ENCODE measurements at regions of chr5 and their contacts with region 1.

Region 1: GRCh38 chr5:177390363-177391300 is 6.4 kb downstream of the SLC34A1 start:
- DNase-seq: peak; percentile 95
- H3K4me3 Mint-ChIP-seq: peak overlapping the region; percentile 10
- H3K27ac Mint-ChIP-seq: peak overlapping the region; percentile 79
- H3K4me1 Mint-ChIP-seq: peaks cover 34% of the 10 kb centered on the region
- H3K27me3 Mint-ChIP-seq: no peaks in the 10 kb centered on the region

Region 2: DNA sequence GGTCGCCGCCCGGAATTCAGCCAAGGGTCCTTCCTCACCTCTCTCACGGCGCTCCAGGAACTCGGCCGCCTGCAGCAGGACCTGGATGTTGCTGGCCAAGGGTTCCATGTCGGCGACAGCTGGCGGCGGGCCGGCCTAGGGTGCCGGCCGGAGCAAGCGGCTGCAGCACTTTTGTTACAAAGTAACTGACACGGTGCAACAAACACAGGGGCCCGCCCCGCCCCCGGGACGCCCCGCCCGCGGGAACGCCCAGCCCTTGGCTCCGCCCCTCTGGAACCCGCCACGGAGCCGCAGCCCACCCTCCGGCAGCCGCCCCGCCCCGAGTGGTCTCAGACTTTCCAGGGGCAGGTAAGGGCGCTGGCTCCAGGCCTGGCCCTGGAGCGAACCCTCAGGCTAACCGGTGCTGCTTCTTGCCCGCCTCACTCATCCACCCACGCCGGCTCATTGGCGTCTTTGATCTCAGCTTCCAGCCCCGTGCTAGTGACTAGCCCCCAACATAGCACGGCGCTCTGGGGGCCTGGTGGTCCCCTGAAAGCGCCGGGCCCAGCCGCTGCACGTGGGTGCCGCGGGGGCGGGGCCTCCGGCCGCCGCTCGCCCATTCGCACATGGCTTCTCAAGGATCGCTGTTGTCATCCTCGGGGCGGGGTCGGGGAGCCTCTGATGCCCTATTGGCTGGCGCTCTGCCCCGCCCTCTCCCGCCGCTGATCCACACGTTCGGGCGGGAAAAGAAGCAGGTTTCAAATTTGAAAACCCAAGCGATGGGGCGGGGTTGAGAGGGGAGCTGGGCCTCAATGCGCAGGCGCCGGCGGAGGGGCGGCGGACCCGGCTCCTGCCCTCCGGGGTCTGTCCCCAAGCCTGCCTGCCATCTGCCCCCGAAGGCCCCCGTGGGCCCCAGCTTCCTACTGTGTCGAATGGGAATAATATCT is 78.6 kb before region 1 on chr5 and contains the start of gene MXD3:
- CTCF ChIA-PET with region 1: interaction called, 25 read pairs
- intact Hi-C with region 1: loop called (anchors 2 kb)
- DNase-seq: peak; percentile 99
- H3K4me3 Mint-ChIP-seq: peak within 1 kb of the TSS; percentile 97
- H3K27ac Mint-ChIP-seq: peak within 1 kb of the TSS; percentile 82
- H3K4me1 Mint-ChIP-seq: peaks cover 20% of the 10 kb centered on the region
- H3K27me3 Mint-ChIP-seq: peaks cover 3% of the 10 kb centered on the region
- total RNA-seq, gene MXD3: 45.0 to 51.7 TPM

Region 3: DNA sequence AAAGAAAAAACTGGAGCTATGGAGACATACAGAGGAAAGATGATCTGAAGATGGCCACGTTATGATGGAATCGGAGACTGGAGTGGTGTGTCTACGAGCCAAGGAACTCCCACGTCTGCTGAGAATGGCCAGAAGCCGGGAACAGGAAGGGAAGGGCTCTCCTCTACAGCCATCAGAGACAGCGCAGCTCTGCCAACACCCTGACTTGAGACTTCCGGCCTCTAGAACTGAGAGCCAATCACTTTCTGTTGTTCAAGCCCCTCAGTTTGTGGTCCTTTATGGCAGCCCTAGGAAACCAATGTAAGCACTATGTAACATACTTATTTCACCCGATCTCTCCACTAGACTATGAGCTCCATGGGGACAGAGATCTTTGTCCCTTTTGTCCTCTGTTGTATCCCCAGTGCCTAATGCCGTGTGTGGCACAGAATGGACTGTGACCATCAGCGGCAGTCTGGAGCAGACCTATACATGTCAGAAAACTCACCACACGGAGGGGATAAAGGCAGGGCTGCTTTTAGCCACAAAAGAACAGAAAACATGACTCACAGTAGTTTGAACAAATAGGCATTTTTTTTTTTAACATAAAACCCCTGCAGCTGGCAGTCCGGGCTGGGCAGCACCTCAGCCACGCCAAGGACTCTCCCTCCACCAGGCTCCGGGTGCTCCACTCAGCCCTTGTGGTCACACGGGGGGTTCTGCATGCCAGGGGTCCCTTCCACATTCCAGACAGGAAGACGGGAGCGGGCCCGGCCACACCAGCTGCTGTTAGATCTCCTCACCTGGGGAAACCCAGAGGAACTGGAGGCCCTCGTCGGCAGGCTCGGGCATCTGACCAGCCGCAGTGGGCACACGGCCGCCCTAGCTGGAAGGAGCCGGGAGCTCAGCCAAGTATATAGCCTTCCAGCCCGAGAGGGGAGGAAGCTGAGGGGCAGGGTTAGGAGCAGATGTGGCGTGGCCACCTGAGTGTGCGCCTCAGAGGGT is 62.8 kb before region 1 on chr5:
- CTCF ChIA-PET with region 1: interaction called, 10 read pairs
- intact Hi-C with region 1: no loop called
- DNase-seq: peak; percentile 26
- H3K4me3 Mint-ChIP-seq: no peak overlapping the region
- H3K27ac Mint-ChIP-seq: peak overlapping the region; percentile 5
- H3K4me1 Mint-ChIP-seq: peaks cover 2% of the 10 kb centered on the region
- H3K27me3 Mint-ChIP-seq: no peaks in the 10 kb centered on the region

Region 4: DNA sequence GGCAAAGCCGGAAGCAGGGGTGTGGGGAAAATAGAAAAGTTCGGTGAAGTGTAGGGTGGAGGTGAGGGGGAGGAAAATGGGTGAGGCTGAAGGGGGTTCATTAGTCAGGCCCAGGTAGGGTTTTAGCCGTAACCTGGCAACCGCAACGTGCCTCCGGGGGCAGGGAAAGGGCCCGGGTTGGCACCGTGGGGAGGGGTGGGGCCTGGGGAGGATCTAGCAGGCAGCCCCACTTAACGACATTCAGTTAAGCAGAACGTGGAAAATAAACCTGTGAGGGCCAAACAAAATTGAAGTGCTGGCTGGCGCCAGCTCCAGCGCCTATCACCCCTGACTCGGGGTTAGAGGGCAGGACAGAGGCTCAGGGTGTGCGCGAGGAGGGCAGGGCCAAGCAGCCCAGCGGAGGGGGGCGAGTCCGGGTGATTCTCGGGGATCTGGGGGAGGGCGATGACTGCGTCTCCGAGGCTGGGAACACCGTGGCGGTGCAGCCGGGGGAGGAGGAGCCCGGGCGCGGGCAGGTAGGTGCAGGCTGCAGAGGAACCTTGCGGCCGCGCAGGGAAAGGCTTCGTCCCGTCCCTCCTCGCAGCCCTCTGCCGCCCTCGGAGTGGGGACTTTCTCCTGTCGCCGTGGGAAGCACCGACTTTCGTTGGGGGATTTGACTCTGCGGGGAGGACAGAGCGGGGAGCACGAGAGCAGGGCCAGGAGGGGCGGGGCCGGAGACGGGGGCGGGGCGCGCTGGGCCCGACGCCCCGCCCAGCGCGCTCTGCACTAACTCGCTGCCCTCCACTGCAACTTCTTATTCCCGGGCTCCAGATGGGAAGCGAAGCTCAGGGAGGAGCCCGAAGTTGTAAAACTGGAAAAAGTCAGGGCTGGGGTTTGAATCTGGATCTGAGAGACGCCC is 27.8 kb before region 1 on chr5:
- CTCF ChIA-PET with region 1: interaction called, 77 read pairs
- intact Hi-C with region 1: loop called (anchors 1 kb)
- DNase-seq: peak; percentile 89
- H3K4me3 Mint-ChIP-seq: peak overlapping the region; percentile 75
- H3K27ac Mint-ChIP-seq: peak overlapping the region; percentile 84
- H3K4me1 Mint-ChIP-seq: peaks cover 74% of the 10 kb centered on the region
- H3K27me3 Mint-ChIP-seq: no peaks in the 10 kb centered on the region

Region 5: DNA sequence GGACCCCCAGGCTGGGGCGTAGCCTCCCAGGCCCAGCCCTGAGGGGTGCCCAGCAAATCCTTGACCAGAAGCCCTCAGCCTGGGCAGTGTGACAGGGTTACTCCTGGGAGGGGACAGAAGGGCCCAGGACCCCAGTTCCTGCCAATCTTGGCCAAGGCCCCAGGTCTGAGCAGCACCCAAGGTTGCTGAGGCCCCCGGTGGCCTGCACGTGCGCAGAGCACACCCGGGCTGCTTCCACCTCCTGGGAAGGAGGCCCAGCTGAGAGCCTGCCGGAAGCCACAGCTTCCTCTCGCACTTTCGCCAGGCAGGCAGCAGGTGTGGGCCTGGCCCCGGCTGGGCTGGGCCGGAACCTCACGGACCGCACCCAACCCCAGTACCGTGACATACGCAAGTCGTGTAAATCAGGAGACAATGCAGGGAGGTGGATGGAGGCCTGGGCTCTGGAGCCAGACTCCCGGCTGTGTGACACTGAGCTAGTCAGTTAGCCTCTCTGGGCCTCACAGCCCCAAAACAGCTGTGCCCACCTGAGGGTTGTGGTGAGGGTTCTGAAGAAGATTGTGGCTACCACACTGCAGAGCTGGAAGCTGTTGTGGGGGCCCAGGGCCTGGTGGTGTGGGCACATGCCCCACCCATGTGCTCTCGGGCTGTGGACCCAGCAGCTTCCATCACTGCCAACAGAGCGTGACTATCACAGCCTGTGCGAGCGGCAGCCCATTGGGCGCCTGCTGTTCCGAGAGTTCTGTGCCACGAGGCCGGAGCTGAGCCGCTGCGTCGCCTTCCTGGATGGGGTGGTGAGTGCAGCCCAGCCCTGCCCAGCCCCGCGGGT is 40.9 kb after region 1 on chr5:
- CTCF ChIA-PET with region 1: interaction called, 19 read pairs
- intact Hi-C with region 1: loop called (anchors 1 kb)
- DNase-seq: peak; percentile 79
- H3K4me3 Mint-ChIP-seq: peak overlapping the region; percentile 95
- H3K27ac Mint-ChIP-seq: peak overlapping the region; percentile 95
- H3K4me1 Mint-ChIP-seq: peaks cover 74% of the 10 kb centered on the region
- H3K27me3 Mint-ChIP-seq: no peaks in the 10 kb centered on the region

Region 6: GRCh38 chr5:177446200-177447065 is 55.8 kb after region 1 on chr5 and contains the start of gene PRR7:
- CTCF ChIA-PET with region 1: interaction called, 125 read pairs
- intact Hi-C with region 1: no loop called
- DNase-seq: peak; percentile 65
- H3K4me3 Mint-ChIP-seq: peak within 1 kb of the TSS; percentile 77
- H3K27ac Mint-ChIP-seq: peak within 1 kb of the TSS; percentile 92
- H3K4me1 Mint-ChIP-seq: peaks cover 45% of the 10 kb centered on the region
- H3K27me3 Mint-ChIP-seq: no peaks in the 10 kb centered on the region
- total RNA-seq, gene PRR7: 7.4 to 8.2 TPM

Region 7: GRCh38 chr5:177497292-177498033 is 106.8 kb after region 1 on chr5 and contains the start of gene PDLIM7:
- CTCF ChIA-PET with region 1: interaction called, 72 read pairs
- intact Hi-C with region 1: loop called (anchors 1 kb)
- DNase-seq: peak; percentile 96
- H3K4me3 Mint-ChIP-seq: peak within 1 kb of the TSS; percentile 84
- H3K27ac Mint-ChIP-seq: no peak within 1 kb of the TSS
- H3K4me1 Mint-ChIP-seq: peaks cover 35% of the 10 kb centered on the region
- H3K27me3 Mint-ChIP-seq: peaks cover 14% of the 10 kb centered on the region
- total RNA-seq, gene PDLIM7: 41.2 to 42.2 TPM

Measured in activated naive CD4-positive, alpha-beta T cell treated with anti-CD3 and anti-CD28 coated beads for 36 hours (primary cell).